Endothelial cell of umbilical vein (primary cell): ENCODE measurements at regions of chr14 and their contacts with region 1.

Region 1: DNA sequence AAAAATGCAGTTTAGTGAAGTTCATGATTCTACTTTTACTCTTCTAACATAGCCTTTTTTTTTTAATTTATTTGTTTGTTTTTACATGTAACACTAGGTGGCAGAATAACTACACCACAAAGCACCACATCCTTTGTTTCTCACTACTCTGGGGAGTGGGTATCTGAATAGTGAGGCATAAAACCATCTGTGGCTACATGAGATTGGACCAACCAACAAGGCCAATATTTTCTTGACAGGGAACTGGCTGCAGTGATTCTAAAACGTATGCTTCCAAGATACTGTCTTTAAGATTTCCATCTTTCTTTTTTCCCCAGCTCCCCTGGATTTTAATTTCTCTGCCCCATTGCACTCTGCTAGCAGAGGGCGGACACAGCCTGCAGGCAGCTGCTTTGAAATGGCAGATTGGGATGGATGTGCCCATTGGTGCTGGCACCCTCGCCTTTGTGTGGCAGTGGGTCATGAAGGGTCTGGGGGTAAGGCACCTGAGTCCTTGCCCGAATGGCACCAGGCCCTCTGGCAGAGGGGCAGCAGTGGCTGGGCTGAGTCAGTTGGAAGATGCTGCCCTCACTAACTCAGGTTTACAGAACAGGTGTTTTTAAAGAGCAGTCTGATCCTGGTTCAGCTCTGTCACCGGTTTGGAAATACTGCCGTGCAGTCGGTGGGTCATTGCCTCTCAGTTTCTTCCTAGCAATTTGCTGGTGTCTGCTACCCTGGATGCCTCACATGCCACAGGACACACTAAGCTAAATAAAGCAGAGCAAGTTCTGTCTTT is 429.1 kb downstream of the RAD51B start:
- DNase-seq: peak; percentile 85
- H3K4me3 ChIP-seq: no peak overlapping the region
- H3K27ac ChIP-seq: peak overlapping the region; percentile 16
- H3K4me1 ChIP-seq: peaks cover 52% of the 10 kb centered on the region
- H3K27me3 ChIP-seq: no peaks in the 10 kb centered on the region
- CTCF ChIP-seq: peak; percentile 22 to 29
- POLR2A ChIP-seq: no peak

Region 2: DNA sequence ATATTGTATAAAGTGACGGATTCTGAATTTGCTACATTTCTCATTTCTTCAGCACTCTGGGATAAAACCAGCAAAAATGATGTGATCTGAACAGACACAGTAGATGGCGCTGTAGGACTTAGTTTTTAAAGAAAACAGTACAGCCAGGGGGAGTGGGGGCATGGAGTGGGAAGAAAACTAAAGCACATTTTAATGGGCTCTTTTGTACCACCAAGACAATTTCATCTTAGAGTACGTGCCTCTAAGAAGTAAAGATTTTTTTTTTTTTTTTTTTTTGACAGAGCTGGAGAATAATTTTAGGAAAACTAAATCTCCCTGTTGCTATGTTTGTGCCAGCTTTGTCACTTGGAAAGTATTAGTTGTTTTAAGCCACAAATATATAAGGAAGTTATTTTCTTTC is 304.7 kb before region 1 on chr14:
- CTCF ChIA-PET with region 1: interaction called, 67 read pairs
- POLR2A ChIA-PET with region 1: no interaction called
- dilution Hi-C with region 1: no loop called
- intact Hi-C with region 1: loop called (anchors 1 kb)
- DNase-seq: peak; percentile 85
- H3K4me3 ChIP-seq: no peak overlapping the region
- H3K27ac ChIP-seq: no peak overlapping the region
- H3K4me1 ChIP-seq: peaks cover 6% of the 10 kb centered on the region
- H3K27me3 ChIP-seq: no peaks in the 10 kb centered on the region
- CTCF ChIP-seq: peak; percentile 37 to 61
- POLR2A ChIP-seq: no peak

Region 3: GRCh38 chr14:68278581-68279436 is 30.1 kb after region 1 on chr14:
- CTCF ChIA-PET with region 1: no interaction called
- POLR2A ChIA-PET with region 1: no interaction called
- dilution Hi-C with region 1: no loop called
- intact Hi-C with region 1: no loop called
- DNase-seq: no peak
- H3K4me3 ChIP-seq: no peak overlapping the region
- H3K27ac ChIP-seq: no peak overlapping the region
- H3K4me1 ChIP-seq: peaks cover 10% of the 10 kb centered on the region
- H3K27me3 ChIP-seq: no peaks in the 10 kb centered on the region
- CTCF ChIP-seq: no peak
- POLR2A ChIP-seq: no peak

Region 4: DNA sequence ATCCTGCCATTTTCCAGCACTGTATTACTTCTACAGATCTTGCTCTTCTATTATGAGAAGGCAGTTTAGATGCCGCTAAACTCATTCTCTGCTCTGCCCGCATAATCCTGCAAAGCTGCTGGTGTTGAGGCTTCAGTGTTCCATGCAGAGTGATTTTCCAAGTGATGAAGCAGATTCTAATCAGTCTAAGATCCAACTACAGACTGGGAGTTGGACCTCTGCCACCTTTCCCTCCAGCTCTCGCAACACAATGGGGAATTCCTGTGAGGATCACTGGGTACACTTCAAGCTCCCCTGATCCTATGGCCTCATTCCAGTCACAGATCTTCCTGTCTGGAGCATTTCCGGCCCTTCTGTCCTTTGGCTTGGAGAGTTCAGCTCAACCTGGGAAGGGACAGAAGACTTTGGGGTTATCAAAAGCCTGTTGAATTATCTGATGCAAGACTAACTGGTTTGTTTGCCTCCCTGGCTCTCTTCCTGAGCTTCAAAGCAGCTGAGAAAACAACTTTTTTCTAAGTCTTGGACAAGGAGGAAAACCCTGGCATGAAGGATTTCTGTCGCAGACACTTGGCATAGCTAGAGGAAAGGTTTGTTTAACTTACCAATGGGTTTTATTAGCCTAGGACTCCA is 210.3 kb after region 1 on chr14:
- CTCF ChIA-PET with region 1: interaction called, 17 read pairs
- POLR2A ChIA-PET with region 1: no interaction called
- dilution Hi-C with region 1: no loop called
- intact Hi-C with region 1: loop called (anchors 2 kb)
- DNase-seq: peak; percentile 98
- H3K4me3 ChIP-seq: no peak overlapping the region
- H3K27ac ChIP-seq: peak overlapping the region; percentile 85
- H3K4me1 ChIP-seq: peaks cover 30% of the 10 kb centered on the region
- H3K27me3 ChIP-seq: no peaks in the 10 kb centered on the region
- CTCF ChIP-seq: no peak
- POLR2A ChIP-seq: peak; percentile 23

Region 5: DNA sequence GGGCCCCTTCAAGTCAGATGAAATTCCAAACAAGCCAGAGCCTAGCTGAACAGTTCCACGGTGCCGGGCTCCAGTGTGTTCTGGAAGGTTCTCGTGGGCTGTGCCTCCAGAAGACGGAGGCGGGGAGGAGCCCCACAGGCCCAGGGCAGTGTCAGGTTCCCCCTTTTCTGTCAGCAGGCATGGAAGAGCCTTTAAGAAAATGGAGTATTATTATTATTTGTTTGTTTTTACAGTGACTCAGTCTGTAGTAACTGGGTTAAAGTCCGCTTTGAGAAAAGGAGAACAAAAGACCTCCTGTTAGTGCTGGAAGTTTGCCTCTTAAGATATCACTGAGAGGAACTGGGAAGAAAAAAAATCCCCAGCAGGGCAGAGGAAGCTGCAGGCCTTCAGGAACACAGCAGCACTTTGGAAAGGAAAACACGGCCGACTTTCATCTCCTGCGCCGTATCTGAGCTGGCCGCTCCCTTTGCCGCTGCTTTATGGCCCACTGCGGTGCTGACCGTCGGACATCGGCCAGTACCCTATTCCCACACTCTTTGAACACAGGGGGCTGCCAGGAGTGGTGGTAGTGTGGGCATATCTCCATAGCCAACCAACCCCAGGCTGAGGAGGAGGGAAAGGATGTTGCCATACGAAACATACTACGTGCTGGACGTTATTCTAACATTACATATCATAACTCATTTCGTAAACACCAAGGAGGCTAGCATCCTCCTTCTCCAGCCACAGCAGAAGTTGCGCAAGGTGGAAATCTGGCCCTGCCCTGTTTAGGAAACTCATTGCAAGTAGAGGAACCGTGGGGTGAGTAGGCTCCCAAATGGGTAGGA is 350.2 kb after region 1 on chr14:
- CTCF ChIA-PET with region 1: no interaction called
- POLR2A ChIA-PET with region 1: no interaction called
- dilution Hi-C with region 1: no loop called
- intact Hi-C with region 1: loop called (anchors 1 kb)
- DNase-seq: peak; percentile 97
- H3K4me3 ChIP-seq: no peak overlapping the region
- H3K27ac ChIP-seq: peak overlapping the region; percentile 82
- H3K4me1 ChIP-seq: peaks cover 24% of the 10 kb centered on the region
- H3K27me3 ChIP-seq: no peaks in the 10 kb centered on the region
- CTCF ChIP-seq: no peak
- POLR2A ChIP-seq: peak; percentile 55

Region 6: GRCh38 chr14:68788996-68789820 is 540.5 kb after region 1 on chr14:
- CTCF ChIA-PET with region 1: interaction called, 122 read pairs
- POLR2A ChIA-PET with region 1: interaction called, 13 read pairs
- dilution Hi-C with region 1: no loop called
- intact Hi-C with region 1: loop called (anchors 1 kb)
- DNase-seq: peak; percentile 79
- H3K4me3 ChIP-seq: peak overlapping the region; percentile 96
- H3K27ac ChIP-seq: peak overlapping the region; percentile 21
- H3K4me1 ChIP-seq: peaks cover 43% of the 10 kb centered on the region
- H3K27me3 ChIP-seq: no peaks in the 10 kb centered on the region
- CTCF ChIP-seq: peak; percentile 71 to 82
- POLR2A ChIP-seq: peak; percentile 14

Region 7: DNA sequence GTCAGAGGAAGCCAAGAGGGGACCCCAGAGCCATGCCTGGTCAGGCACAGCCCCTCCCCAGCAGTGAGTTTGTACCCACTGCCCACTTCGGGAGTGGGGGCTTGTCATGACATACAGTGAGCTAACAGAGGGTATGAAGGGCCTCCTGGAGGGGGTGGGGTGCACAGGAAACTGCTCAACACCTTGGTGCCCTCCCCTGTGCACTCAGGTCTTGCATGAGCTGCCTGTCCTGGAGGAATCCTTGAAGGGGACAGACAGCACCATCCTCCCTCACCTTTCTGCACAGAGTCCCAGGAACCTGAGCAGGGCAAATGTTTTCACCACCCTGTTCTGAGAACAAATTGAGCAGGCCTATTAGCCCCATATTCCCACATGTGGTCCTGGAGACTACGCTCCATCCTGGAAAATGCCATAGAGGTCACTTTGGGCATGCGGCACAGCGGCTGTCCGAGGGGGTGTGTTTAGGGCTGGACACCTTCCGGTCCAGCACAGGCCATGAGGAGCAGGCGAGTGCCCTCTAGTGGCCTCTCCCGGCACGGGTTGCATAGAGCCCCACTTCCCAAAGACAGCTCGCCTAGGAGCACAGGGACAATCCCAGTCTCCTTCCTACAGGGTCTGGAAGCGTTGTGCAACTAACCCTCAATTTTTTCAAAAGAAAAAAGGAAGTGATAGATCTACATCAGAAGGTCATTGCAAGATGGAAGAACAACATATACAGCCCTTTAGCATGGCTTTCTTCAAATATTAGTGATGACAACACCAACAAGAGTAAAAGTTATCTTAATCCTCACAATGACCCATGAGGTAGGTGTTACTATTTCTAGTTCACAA is 576.1 kb after region 1 on chr14:
- CTCF ChIA-PET with region 1: interaction called, 11 read pairs
- POLR2A ChIA-PET with region 1: no interaction called
- dilution Hi-C with region 1: no loop called
- intact Hi-C with region 1: no loop called
- DNase-seq: peak; percentile 66
- H3K4me3 ChIP-seq: no peak overlapping the region
- H3K27ac ChIP-seq: no peak overlapping the region
- H3K4me1 ChIP-seq: no peaks in the 10 kb centered on the region
- H3K27me3 ChIP-seq: no peaks in the 10 kb centered on the region
- CTCF ChIP-seq: peak; percentile 92 to 95
- POLR2A ChIP-seq: no peak